H1 (cell line): ENCODE measurements at regions of chr6 and their contacts with region 1.

Region 1: GRCh38 chr6:16332175-16332542 is 93.8 kb downstream of the GMPR start:
- DNase-seq: peak; percentile 64 to 91
- H3K4me3 ChIP-seq: peak overlapping the region in 1 of 4 experiments; percentile 32; a peak in 2 of 8 replicates
- H3K27ac ChIP-seq: no peak overlapping the region
- H3K4me1 ChIP-seq: peaks cover 0 to 5% (median 3%) of the 10 kb centered on the region in 4 experiments; a peak in 3 of 7 replicates
- H3K27me3 ChIP-seq: no peaks in the 10 kb centered on the region
- CTCF ChIP-seq: peak; percentile 58 to 91 (median 77)
- EP300 ChIP-seq: peak in 1 of 2 experiments; percentile 34; a peak in 1 of 3 replicates
- POLR2A ChIP-seq: no peak
- RAD21 ChIP-seq: peak; percentile 92 to 95

Region 2: DNA sequence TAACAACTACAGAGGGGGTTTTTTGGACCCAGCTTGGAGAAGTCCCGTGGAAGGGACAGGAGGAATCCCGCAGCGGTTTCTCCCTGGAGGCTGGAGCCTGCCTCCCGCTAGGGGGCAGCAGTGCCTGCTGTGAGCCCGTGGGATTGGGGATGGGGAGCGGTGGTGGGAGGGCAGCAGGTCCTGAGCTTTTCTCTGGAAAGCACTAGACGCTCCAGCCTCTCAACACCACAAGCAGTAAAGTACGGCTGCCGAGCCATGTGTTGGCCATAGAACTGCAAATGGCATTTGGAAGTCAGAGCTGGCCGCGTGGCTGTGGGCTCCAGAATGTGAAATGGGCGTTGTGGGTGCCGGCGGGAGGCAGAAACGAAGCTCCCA is 46.0 kb before region 1 on chr6:
- CTCF ChIA-PET with region 1: interaction called, 18 read pairs
- POLR2A ChIA-PET with region 1: no interaction called
- DNase-seq: peak; percentile 43 to 92
- H3K4me3 ChIP-seq: peak overlapping the region in 1 of 4 experiments; percentile 38; a peak in 1 of 8 replicates
- H3K27ac ChIP-seq: no peak overlapping the region
- H3K4me1 ChIP-seq: 0 out of 7 replicates have a peak, but pooled peaks cover 0 to 2% (median 0%) of the 10 kb centered on the region in 4 experiments
- H3K27me3 ChIP-seq: no peaks in the 10 kb centered on the region
- CTCF ChIP-seq: peak; percentile 86 to 93 (median 92)
- EP300 ChIP-seq: no peak
- POLR2A ChIP-seq: no peak
- RAD21 ChIP-seq: peak; percentile 78 to 86

Region 3: DNA sequence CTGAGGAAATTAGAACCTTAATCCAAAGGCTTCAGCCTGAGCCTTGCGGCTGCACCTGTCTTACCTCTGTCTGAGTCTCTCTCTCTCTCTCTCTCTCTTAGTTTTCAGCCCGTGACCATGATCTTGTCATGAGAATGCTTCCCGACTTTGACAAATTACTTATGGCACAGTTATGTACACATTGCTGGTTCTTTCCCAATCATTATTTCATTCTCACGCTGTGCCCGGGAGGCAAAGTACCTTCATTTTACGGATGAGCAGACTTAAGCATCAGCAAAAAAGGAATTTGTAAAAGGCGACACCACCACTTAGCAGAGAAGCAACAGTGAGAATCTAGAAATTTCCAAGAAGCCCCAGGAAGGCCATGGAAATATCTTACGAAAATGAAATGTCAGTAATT is 39.2 kb before region 1 on chr6:
- CTCF ChIA-PET with region 1: interaction called, 18 read pairs
- POLR2A ChIA-PET with region 1: no interaction called
- DNase-seq: no peak
- H3K4me3 ChIP-seq: no peak overlapping the region
- H3K27ac ChIP-seq: no peak overlapping the region
- H3K4me1 ChIP-seq: 0 out of 7 replicates have a peak, but pooled peaks cover 0 to 2% (median 0%) of the 10 kb centered on the region in 4 experiments
- H3K27me3 ChIP-seq: no peaks in the 10 kb centered on the region
- CTCF ChIP-seq: no peak
- EP300 ChIP-seq: no peak
- POLR2A ChIP-seq: no peak
- RAD21 ChIP-seq: no peak

Region 4: GRCh38 chr6:16319813-16320532 is 12.2 kb before region 1 on chr6:
- CTCF ChIA-PET with region 1: interaction called, 10 read pairs
- POLR2A ChIA-PET with region 1: no interaction called
- DNase-seq: no peak
- H3K4me3 ChIP-seq: no peak overlapping the region
- H3K27ac ChIP-seq: no peak overlapping the region
- H3K4me1 ChIP-seq: peaks cover 6 to 14% (median 12%) of the 10 kb centered on the region in 4 experiments
- H3K27me3 ChIP-seq: no peaks in the 10 kb centered on the region
- CTCF ChIP-seq: no peak
- EP300 ChIP-seq: no peak
- POLR2A ChIP-seq: no peak
- RAD21 ChIP-seq: no peak

Region 5: GRCh38 chr6:16345437-16346330 is 13.5 kb after region 1 on chr6:
- CTCF ChIA-PET with region 1: interaction called, 84 read pairs
- POLR2A ChIA-PET with region 1: no interaction called
- DNase-seq: no peak
- H3K4me3 ChIP-seq: no peak overlapping the region
- H3K27ac ChIP-seq: no peak overlapping the region
- H3K4me1 ChIP-seq: peaks cover 0 to 3% (median 0%) of the 10 kb centered on the region in 4 experiments; a peak in 2 of 7 replicates
- H3K27me3 ChIP-seq: no peaks in the 10 kb centered on the region
- CTCF ChIP-seq: no peak
- EP300 ChIP-seq: no peak
- POLR2A ChIP-seq: no peak
- RAD21 ChIP-seq: no peak

Region 6: GRCh38 chr6:16355699-16356446 is 23.7 kb after region 1 on chr6:
- CTCF ChIA-PET with region 1: interaction called, 84 read pairs
- POLR2A ChIA-PET with region 1: interaction called, 3 read pairs
- DNase-seq: no peak
- H3K4me3 ChIP-seq: no peak overlapping the region
- H3K27ac ChIP-seq: no peak overlapping the region
- H3K4me1 ChIP-seq: peaks cover 0 to 4% (median 1%) of the 10 kb centered on the region in 4 experiments; a peak in 2 of 7 replicates
- H3K27me3 ChIP-seq: no peaks in the 10 kb centered on the region
- CTCF ChIP-seq: peak in 2 of 3 experiments; percentile 4 to 11; a peak in 1 of 4 replicates
- EP300 ChIP-seq: no peak
- POLR2A ChIP-seq: no peak
- RAD21 ChIP-seq: peak in 1 of 2 experiments; percentile 12; a peak in 1 of 4 replicates

Region 7: DNA sequence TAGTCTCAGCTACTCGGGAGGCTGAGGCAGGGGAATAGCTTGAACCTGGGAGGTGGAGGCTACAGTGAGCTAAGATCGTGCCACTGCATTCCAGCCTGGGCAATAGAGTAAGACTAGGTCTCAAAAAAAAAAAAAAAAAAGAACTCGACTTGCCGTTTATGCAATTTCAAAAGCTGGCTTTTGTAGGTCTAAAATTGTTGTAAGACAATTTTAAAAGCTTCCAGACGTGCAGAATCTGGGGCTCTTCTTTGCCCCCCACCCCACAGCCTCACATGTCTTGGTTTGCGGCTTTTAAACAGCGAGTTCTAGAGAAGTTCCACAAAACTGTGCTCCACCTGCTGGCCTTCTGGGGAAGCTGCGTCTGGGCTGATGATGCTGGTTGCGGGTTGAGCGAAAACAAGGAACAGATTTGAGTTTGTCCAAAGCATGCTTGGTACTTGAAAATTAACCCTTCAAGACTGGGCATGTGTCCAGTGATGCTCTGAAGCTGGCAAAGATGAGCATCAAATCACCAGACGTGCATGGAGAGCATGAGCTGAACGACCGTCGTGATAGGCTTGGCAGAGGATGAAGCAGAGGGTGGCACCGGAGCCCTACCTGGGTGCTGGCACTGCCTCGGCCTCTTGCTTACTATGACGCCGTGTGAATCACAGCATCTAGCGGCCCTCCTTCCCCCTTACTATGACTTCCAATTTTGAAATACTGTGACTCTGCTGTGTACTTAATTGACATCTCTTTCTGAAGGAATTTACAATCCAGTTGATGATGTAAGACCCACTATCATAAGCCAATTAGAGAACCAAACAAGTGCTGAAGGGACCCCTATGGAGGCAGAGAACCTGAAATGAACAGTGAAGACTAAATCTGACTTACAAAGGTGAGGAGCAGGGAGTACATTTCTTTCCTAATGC is 77.6 kb after region 1 on chr6:
- CTCF ChIA-PET with region 1: interaction called, 92 read pairs
- POLR2A ChIA-PET with region 1: no interaction called
- DNase-seq: peak; percentile 21 to 75
- H3K4me3 ChIP-seq: no peak overlapping the region
- H3K27ac ChIP-seq: no peak overlapping the region
- H3K4me1 ChIP-seq: peaks cover 0 to 2% (median 0%) of the 10 kb centered on the region in 4 experiments; a peak in 2 of 7 replicates
- H3K27me3 ChIP-seq: no peaks in the 10 kb centered on the region
- CTCF ChIP-seq: peak; percentile 80 to 89 (median 84)
- EP300 ChIP-seq: no peak
- POLR2A ChIP-seq: no peak
- RAD21 ChIP-seq: peak; percentile 65 to 74